Pancreas (tissue), 10 donors: ENCODE measurements at regions of chr3 and their contacts with region 1.

Region 1: GRCh38 chr3:156664831-156665178 is 9.6 kb upstream of the TIPARP start:
- DNase-seq: no peak
- ATAC-seq: no peak
- H3K4me3 ChIP-seq: no peak overlapping the region
- H3K27ac ChIP-seq: no peak overlapping the region
- H3K4me1 ChIP-seq: peaks cover 0 to 17% (median 3%) of the 10 kb centered on the region in 3 donors
- H3K27me3 ChIP-seq: no peaks in the 10 kb centered on the region
- CTCF ChIP-seq: no peak

Region 2: GRCh38 chr3:156563900-156564682 is 100.7 kb before region 1 on chr3:
- intact Hi-C with region 1: loop called in 2 of 3 experiments (anchors 10 kb)
- DNase-seq: no peak
- ATAC-seq: no peak
- H3K4me3 ChIP-seq: no peak overlapping the region
- H3K27ac ChIP-seq: no peak overlapping the region
- H3K4me1 ChIP-seq: peaks cover 3 to 7% (median 4%) of the 10 kb centered on the region in 3 donors
- H3K27me3 ChIP-seq: no peaks in the 10 kb centered on the region
- CTCF ChIP-seq: no peak